ENCODE measurements at regions of chr6 and their contacts with region 1.

Region 1: DNA sequence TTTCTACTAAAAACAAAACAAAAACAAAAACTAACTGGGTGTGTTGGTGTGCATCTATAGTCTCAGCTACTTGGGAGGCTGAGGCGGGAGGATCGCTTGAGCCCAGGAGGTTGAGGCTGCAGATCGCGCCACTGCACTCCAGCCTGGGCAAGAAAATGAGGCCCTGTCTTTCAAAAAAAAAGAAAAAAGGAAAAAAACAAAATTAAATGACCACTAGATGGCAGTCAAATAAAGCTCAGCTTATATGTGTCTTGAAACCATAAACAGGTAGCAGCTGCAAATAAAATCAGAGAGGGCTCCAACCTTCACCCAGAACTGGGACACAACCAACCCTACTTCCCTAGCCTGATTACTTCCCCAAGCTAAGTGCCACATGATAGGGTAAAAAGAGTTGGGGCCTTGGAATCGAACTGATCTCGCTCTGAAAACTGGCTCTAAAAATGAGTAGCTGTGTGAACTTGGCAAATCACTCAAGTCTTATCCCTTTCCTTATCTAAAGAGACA is 67.1 kb upstream of the ADGRF4 start:
- DNase-seq: no peak
- H3K4me3 ChIP-seq: no peak overlapping the region
- CTCF ChIP-seq: no peak
- POLR2A ChIP-seq: no peak

Region 2: DNA sequence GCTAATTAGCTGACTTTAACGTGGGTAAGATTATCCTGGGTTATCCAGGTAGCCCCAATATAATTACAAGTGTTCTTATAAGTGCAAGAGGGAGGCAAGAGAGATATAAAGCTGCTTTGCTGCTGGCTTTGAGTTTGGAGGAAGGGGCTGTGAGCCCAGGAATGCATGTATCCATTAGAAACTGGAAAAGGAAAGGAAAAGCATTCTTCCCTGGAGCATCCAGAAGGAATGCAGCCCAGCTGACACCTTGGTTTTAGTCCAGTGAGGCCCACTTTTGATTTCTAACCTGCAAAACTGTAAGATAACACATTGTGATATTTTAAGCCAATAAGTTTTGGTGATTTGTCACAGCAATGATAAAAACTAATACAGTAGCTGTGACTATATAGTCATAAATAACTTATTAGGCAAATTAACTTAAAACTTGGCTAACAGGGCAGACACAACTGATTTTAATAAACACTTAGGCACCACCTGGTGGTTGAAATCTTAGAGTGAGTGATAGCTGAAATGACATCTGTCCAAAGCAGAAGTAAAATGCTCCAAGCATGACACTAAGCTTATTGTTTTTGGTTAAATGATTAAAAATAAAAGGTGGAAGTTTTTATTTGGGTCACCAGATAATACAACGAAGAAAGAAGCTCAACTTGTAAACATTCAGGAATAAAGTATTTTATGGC is 102.7 kb after region 1 on chr6:
- intact Hi-C with region 1: loop called (anchors 5 kb)
- DNase-seq: no peak
- H3K4me3 ChIP-seq: no peak overlapping the region
- CTCF ChIP-seq: no peak
- POLR2A ChIP-seq: no peak

Region 3: DNA sequence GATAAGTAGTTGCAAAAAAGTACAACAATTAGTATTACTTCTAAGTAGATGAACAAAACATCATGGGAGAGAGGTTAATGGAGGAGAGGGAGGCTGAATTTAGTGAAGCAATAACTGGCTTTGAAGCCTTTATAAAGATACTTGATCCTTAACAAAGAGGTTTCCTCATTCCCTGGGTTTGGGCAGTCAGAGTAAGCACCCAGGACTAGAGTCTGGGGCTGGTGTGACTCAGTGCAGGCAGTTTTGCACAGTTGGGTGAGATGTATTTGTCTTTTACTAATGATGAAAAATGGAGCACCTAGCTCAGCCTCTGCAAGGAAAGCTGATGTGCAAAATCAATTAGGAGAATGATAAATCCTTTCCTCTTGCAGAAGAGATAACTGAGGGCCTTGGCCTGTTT is 138.7 kb after region 1 on chr6:
- intact Hi-C with region 1: loop called (anchors 10 kb)
- DNase-seq: no peak
- H3K4me3 ChIP-seq: no peak overlapping the region
- CTCF ChIP-seq: no peak
- POLR2A ChIP-seq: no peak

Measured in lower leg skin (tissue), 4 donors.